ENCODE measurements at regions of chr2 and their contacts with region 1.

Region 1: GRCh38 chr2:218269899-218270720 is at the starts of genes AAMP and PNKD:
- DNase-seq: peak; percentile 100
- H3K4me3 Mint-ChIP-seq: peak within 1 kb of the TSS; percentile 99
- H3K27ac Mint-ChIP-seq: peak within 1 kb of the TSS; percentile 96
- H3K4me1 Mint-ChIP-seq: peaks cover 39% of the 10 kb centered on the region
- H3K27me3 Mint-ChIP-seq: peaks cover 2% of the 10 kb centered on the region
- total RNA-seq, gene AAMP: 85.3 and 89.0 TPM in 2 replicates
- total RNA-seq, gene PNKD: 15.0 and 21.5 TPM in 2 replicates

Region 2: GRCh38 chr2:218186355-218186766 is 83.7 kb before region 1 on chr2:
- intact Hi-C with region 1: loop called (anchors 1 kb)
- DNase-seq: peak; percentile 90
- H3K4me3 Mint-ChIP-seq: no peak overlapping the region
- H3K27ac Mint-ChIP-seq: no peak overlapping the region
- H3K4me1 Mint-ChIP-seq: peaks cover 8% of the 10 kb centered on the region
- H3K27me3 Mint-ChIP-seq: peaks cover 13% of the 10 kb centered on the region

Region 3: GRCh38 chr2:218229239-218229638 is 40.9 kb before region 1 on chr2:
- intact Hi-C with region 1: loop called (anchors 1 kb)
- DNase-seq: peak; percentile 85
- H3K4me3 Mint-ChIP-seq: peak overlapping the region; percentile 80
- H3K27ac Mint-ChIP-seq: peak overlapping the region; percentile 93
- H3K4me1 Mint-ChIP-seq: peaks cover 58% of the 10 kb centered on the region
- H3K27me3 Mint-ChIP-seq: no peaks in the 10 kb centered on the region

Region 4: GRCh38 chr2:218292048-218293014 is 22.2 kb after region 1 on chr2 and contains the start of gene TMBIM1:
- intact Hi-C with region 1: loop called (anchors 1 kb)
- DNase-seq: peak; percentile 96
- H3K4me3 Mint-ChIP-seq: peak within 1 kb of the TSS; percentile 94
- H3K27ac Mint-ChIP-seq: peak within 1 kb of the TSS; percentile 91
- H3K4me1 Mint-ChIP-seq: peaks cover 45% of the 10 kb centered on the region
- H3K27me3 Mint-ChIP-seq: peaks cover 3% of the 10 kb centered on the region
- total RNA-seq, gene TMBIM1: 62.6 and 63.1 TPM in 2 replicates

Region 5: DNA sequence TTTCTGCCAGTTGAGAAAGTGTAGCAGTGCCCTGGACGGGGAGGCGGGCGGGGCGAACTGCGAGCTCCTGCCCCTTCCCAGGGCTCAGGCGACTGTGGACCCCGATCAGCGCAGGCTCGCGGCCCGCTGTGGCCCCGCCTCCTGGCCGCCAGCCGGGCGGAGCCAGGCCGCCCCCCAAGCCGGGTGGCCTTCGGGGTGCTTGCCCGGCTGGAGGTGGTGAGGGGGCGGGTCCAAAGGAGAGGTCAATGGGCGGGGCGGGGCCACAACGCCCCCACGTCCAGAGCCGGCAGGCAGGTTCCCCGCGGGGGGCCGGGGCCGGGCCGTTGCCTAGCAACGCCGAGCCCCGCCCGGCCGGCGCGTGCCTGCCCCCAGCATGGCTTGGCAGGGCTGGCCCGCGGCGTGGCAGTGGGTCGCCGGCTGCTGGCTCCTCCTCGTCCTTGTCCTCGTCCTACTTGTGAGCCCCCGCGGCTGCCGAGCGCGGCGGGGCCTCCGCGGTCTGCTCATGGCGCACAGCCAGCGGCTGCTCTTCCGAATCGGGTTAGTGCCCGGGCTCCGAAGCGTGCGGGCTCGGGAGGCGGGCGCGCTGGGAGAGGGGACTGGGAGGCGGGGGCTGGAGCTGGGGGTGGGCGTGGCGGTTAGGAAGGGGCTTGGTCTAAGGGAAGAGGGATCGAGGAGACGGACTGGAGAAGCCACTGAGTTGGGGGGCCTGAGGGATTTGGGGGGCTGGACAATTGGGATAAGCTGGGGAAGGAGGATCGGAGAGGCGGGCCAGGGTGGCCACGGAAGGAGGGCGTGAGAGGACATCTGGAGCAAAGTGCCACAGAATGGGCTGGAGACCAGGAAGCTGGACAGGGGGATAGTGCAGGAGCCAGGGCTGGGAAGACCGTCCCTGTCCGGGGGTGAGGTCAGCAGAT is 53.0 kb after region 1 on chr2:
- intact Hi-C with region 1: no loop called
- DNase-seq: peak; percentile 85
- H3K4me3 Mint-ChIP-seq: peak overlapping the region; percentile 88
- H3K27ac Mint-ChIP-seq: peak overlapping the region; percentile 76
- H3K4me1 Mint-ChIP-seq: peaks cover 15% of the 10 kb centered on the region
- H3K27me3 Mint-ChIP-seq: peaks cover 16% of the 10 kb centered on the region

Region 6: GRCh38 chr2:218343591-218343990 is 73.5 kb after region 1 on chr2:
- intact Hi-C with region 1: no loop called
- DNase-seq: no peak
- H3K4me3 Mint-ChIP-seq: no peak overlapping the region
- H3K27ac Mint-ChIP-seq: no peak overlapping the region
- H3K4me1 Mint-ChIP-seq: no peaks in the 10 kb centered on the region
- H3K27me3 Mint-ChIP-seq: peaks cover 2% of the 10 kb centered on the region

Region 7: DNA sequence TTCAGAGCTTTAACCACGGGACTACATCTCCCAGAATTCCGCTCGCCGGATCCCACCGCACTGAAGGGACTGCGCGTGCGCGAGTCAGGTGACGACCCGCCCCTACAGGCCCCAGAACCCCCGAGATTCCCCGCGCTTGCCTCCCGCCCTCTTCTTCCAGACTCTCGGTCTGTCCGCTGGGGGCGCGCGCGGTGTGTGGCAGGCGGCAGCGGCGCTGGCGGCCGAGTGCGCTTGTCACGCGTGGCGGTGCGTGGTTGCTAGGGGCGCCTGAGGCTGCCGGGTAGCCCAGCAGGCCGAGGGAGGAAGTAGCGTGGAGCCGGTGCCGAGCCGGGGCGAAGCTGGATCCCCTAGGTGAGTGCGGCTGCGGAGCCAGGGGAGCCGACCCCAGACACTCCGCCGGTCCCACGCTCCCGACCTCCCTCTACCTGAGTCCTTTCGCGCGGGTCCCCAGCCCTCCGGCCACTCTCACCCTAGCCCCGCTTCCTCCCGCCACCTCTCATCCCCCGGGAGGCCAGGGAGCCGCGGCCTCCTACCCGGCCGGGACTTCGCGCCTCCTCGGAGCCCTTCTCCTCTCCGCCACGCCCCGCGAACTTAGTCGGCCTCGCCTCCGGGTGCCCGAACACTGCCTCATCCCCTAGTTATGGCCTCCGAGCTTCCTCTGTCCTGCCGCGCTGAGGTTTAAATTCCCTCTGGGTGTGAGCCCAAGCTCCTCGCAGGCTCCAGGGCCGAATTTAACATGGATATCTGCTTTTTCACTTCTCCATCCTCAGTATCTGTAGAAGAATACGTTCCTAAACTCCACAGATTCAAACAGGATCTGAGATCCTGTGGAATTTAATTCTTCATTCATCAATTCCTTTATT is 440.8 kb after region 1 on chr2 and contains the start of gene TTLL4:
- intact Hi-C with region 1: loop called (anchors 1 kb)
- DNase-seq: peak; percentile 100
- H3K4me3 Mint-ChIP-seq: peak within 1 kb of the TSS; percentile 94
- H3K27ac Mint-ChIP-seq: peak within 1 kb of the TSS; percentile 85
- H3K4me1 Mint-ChIP-seq: peaks cover 18% of the 10 kb centered on the region
- H3K27me3 Mint-ChIP-seq: peaks cover 3% of the 10 kb centered on the region
- total RNA-seq, gene TTLL4: 66.1 and 71.2 TPM in 2 replicates